Gastrocnemius medialis (tissue), 4 donors: ENCODE measurements at regions of chr4 and their contacts with region 1.

Region 1: DNA sequence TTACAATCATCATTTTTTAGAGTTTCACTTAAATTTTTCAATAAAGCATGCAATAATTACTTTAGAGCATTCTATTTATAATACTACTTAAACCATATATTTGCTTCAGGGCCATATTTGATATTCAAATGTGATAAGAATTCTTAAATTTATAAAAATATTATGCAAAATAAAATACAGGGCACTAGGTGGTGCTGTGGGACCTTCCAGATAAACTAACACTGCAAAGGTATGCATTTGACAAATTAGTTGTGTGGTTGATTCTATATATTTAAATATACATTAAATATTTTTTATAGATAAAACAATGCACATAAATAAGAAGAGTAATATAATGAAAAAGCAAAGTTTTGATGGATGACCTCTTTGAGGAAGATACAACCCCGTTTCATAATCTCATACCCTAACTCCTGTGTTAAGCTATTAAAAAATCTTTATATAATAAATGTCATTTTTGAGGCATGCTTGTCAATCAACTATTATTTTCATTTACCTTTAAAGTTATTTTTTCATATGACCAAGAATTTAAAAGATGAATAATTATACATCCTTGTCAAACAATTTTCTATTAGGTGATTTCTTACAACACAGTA is 128.4 kb downstream of the REELD1 start:
- DNase-seq: no peak
- ATAC-seq: no peak
- H3K4me3 ChIP-seq: no peak overlapping the region
- H3K27ac ChIP-seq: no peak overlapping the region
- H3K4me1 ChIP-seq: no peaks in the 10 kb centered on the region
- H3K27me3 ChIP-seq: no peaks in the 10 kb centered on the region
- CTCF ChIP-seq: peak in 4 of 5 experiments; percentile 28 to 75 (median 54)
- POLR2A ChIP-seq: no peak

Region 2: DNA sequence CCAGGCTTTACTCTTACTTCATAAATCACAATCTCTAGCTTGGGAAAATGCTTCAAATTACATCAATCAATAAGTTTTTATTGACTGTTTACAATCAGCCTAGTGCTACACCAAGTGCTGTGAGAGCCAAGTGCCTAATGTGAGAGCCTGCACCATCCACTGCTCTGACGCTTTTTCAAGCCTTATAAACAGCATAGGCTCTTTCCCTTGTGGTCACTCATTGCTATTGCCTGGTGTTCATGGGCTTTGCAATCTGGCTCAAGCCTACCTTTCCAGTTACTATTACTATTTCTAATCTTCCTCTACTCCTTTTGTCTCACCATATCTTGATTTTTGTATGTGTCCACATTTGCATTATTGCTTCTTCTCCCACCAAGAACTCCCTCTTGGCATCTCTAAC is 51.4 kb before region 1 on chr4:
- in situ Hi-C with region 1: no loop called
- intact Hi-C with region 1: no loop called
- DNase-seq: no peak
- ATAC-seq: no peak
- H3K4me3 ChIP-seq: no peak overlapping the region
- H3K27ac ChIP-seq: no peak overlapping the region
- H3K4me1 ChIP-seq: no peaks in the 10 kb centered on the region
- H3K27me3 ChIP-seq: no peaks in the 10 kb centered on the region
- CTCF ChIP-seq: no peak
- POLR2A ChIP-seq: no peak

Region 3: GRCh38 chr4:146654687-146655520 is 312.2 kb after region 1 on chr4:
- in situ Hi-C with region 1: no loop called
- intact Hi-C with region 1: loop called (anchors 10 kb)
- DNase-seq: no peak
- ATAC-seq: no peak
- H3K4me3 ChIP-seq: peak overlapping the region; percentile 34 to 57 (median 51)
- H3K27ac ChIP-seq: no peak overlapping the region
- H3K4me1 ChIP-seq: peaks cover 0 to 4% of the 10 kb centered on the region in 2 donors
- H3K27me3 ChIP-seq: peaks cover 37 to 62% (median 59%) of the 10 kb centered on the region in 3 donors
- CTCF ChIP-seq: no peak
- POLR2A ChIP-seq: no peak